ENCODE measurements at regions of chr5 and their contacts with region 1.

Region 1: DNA sequence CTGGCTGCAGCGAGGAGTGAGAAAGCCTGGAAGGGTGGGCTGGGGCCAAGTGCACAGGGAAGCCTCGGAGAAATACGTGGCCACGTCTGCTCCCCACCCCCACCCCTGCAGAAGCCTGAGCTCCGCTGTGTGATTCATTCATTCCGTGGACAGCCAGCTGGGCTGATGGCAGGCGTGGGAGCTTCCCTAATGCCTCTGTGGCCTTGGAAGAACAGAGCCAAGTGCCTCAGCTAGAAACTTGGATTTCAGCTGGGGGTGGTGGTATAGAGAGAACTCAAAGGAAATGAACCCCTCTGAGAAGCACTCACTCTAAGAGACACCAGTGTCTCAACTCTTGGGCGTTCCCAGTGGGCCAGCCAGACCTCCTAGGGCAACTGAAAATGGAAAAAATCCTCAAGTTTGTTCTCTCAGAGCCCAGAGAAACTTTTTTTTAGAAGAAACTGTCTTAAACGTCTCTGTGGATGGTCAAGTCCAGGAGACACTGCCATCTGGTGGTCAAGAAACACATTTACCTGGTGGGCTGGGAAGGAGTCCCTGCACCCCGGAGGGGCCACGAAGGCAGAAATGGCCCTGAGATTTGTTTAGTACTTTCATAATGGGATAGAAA is 18.0 kb downstream of the ATOX1 start:
- DNase-seq: no peak
- ATAC-seq: peak; percentile 70
- H3K4me3 ChIP-seq: no peak overlapping the region
- H3K27ac ChIP-seq: peak overlapping the region; percentile 54
- H3K4me1 ChIP-seq: peaks cover 39% of the 10 kb centered on the region
- H3K27me3 ChIP-seq: no peaks in the 10 kb centered on the region
- CTCF ChIP-seq: peak; percentile 76 to 88 (median 81)
- EP300 ChIP-seq: no peak
- POLR2A ChIP-seq: no peak
- RAD21 ChIP-seq: peak; percentile 90

Region 2: GRCh38 chr5:151499501-151500035 is 240.9 kb before region 1 on chr5:
- CTCF ChIA-PET with region 1: no interaction called
- POLR2A ChIA-PET with region 1: no interaction called
- RAD21 ChIA-PET with region 1: no interaction called
- SMC1A ChIA-PET with region 1: no interaction called
- in situ Hi-C with region 1: no loop called
- intact Hi-C with region 1: loop called (anchors 5 kb)
- DNase-seq: no peak
- ATAC-seq: no peak
- H3K4me3 ChIP-seq: no peak overlapping the region
- H3K27ac ChIP-seq: no peak overlapping the region
- H3K4me1 ChIP-seq: peaks cover 5% of the 10 kb centered on the region; the same call in 1 of the 2 replicates
- H3K27me3 ChIP-seq: no peaks in the 10 kb centered on the region
- CTCF ChIP-seq: no peak
- EP300 ChIP-seq: no peak
- POLR2A ChIP-seq: no peak
- RAD21 ChIP-seq: no peak

Region 3: GRCh38 chr5:151523335-151523734 is 217.1 kb before region 1 on chr5:
- CTCF ChIA-PET with region 1: no interaction called
- POLR2A ChIA-PET with region 1: no interaction called
- RAD21 ChIA-PET with region 1: interaction called, 4 read pairs
- SMC1A ChIA-PET with region 1: interaction called, 3 read pairs
- in situ Hi-C with region 1: loop called (anchors 10 kb)
- intact Hi-C with region 1: loop called (anchors 1 kb)
- DNase-seq: no peak
- ATAC-seq: peak; percentile 97
- H3K4me3 ChIP-seq: no peak overlapping the region
- H3K27ac ChIP-seq: no peak overlapping the region
- H3K4me1 ChIP-seq: no peaks in the 10 kb centered on the region
- H3K27me3 ChIP-seq: peaks cover 0 to 1% of the 10 kb centered on the region in 2 experiments; a peak in 2 of 4 replicates
- CTCF ChIP-seq: peak; percentile 64 to 71 (median 68); a peak in 5 of 6 replicates
- EP300 ChIP-seq: no peak
- POLR2A ChIP-seq: no peak
- RAD21 ChIP-seq: peak; percentile 77

Region 4: GRCh38 chr5:151751091-151751490 is 10.7 kb after region 1 on chr5:
- CTCF ChIA-PET with region 1: interaction called, 35 read pairs
- POLR2A ChIA-PET with region 1: interaction called, 9 read pairs
- RAD21 ChIA-PET with region 1: interaction called, 13 read pairs
- SMC1A ChIA-PET with region 1: interaction called, 23 read pairs
- in situ Hi-C with region 1: no loop called
- intact Hi-C with region 1: no loop called
- DNase-seq: no peak
- ATAC-seq: no peak
- H3K4me3 ChIP-seq: no peak overlapping the region
- H3K27ac ChIP-seq: no peak overlapping the region
- H3K4me1 ChIP-seq: peaks cover 29% of the 10 kb centered on the region
- H3K27me3 ChIP-seq: no peaks in the 10 kb centered on the region
- CTCF ChIP-seq: no peak
- EP300 ChIP-seq: no peak
- POLR2A ChIP-seq: no peak
- RAD21 ChIP-seq: no peak

Region 5: GRCh38 chr5:151771259-151772028 is 31.0 kb after region 1 on chr5 and contains the start of gene G3BP1:
- CTCF ChIA-PET with region 1: interaction called, 30 read pairs
- POLR2A ChIA-PET with region 1: interaction called, 7 read pairs
- RAD21 ChIA-PET with region 1: interaction called, 47 read pairs
- SMC1A ChIA-PET with region 1: interaction called, 12 read pairs
- in situ Hi-C with region 1: no loop called
- intact Hi-C with region 1: loop called (anchors 1 kb)
- DNase-seq: peak; percentile 100
- ATAC-seq: peak; percentile 87
- H3K4me3 ChIP-seq: peak within 1 kb of the TSS; percentile 97
- H3K27ac ChIP-seq: peak within 1 kb of the TSS; percentile 98
- H3K4me1 ChIP-seq: peaks cover 10% of the 10 kb centered on the region
- H3K27me3 ChIP-seq: no peaks in the 10 kb centered on the region
- CTCF ChIP-seq: peak; percentile 64 to 99 (median 71); a peak in 4 of 6 replicates
- EP300 ChIP-seq: no peak
- POLR2A ChIP-seq: peak; percentile 18
- RAD21 ChIP-seq: peak; percentile 67
- polyA plus RNA-seq, gene G3BP1: 49.7 to 52.7 TPM

Measured in GM12878 (cell line).